ENCODE measurements at regions of chr12 and their contacts with region 1.

Region 1: DNA sequence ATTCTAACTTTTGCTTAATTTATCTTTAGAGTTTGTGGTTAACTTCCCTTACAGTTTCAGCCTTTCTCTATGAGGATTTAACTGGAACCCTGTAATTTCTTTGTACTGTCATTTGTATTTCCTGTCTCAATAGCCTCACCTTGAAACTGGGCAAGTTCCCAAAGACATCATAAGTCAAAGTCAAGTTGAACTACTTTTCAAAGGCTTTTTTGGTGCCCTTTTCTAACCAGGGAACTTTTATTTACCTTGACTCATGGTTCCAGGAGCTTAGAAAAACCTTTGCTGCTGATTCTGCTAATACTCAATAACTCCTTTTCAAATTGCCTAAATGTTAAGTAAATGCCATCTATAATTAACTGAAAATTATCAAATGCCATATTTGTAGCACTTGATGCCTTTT is 200.8 kb upstream of the KRR1 start:
- DNase-seq: no peak
- H3K4me3 Mint-ChIP-seq: no peak overlapping the region
- H3K27ac Mint-ChIP-seq: no peak overlapping the region
- H3K4me1 Mint-ChIP-seq: peaks cover 26% of the 10 kb centered on the region
- H3K27me3 Mint-ChIP-seq: peaks cover 12% of the 10 kb centered on the region

Region 2: DNA sequence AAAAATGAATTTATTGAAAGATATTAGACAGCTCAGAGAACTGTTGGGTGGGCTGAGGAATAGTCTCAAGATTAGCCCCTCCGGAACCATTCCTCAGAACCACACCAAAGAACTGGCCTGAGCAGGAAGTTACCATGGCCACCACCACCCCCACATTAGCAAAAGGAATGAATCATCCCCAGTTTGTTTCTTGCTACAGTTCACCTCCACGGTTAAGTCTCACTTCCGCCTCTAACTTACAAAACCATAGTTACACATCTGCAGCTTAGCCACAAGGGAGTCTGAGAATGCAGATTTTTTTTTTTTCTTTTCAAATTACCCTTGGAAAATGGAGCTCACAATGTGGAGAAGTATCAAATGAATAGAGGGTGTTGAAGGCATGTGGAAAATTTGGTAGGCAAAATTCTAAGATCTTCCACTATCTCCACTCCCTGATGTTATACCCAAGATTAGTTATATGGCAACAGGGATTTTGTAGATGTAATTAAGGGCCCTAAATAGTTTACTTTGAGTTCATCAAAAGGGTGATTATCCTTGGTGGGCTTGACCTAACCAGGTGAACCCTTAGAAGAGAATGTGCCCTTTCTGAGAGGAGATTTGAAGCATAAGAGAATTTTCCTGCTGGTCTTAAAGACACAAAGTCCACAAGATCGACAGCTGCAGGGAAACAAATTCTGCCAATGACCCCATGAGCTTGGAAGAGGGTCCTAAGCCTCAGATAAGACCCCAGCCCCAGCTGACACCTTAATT is 71.0 kb before region 1 on chr12:
- intact Hi-C with region 1: loop called (anchors 1 kb)
- DNase-seq: peak; percentile 27
- H3K4me3 Mint-ChIP-seq: no peak overlapping the region
- H3K27ac Mint-ChIP-seq: peak overlapping the region; percentile 76
- H3K4me1 Mint-ChIP-seq: peaks cover 46% of the 10 kb centered on the region
- H3K27me3 Mint-ChIP-seq: peaks cover 12% of the 10 kb centered on the region

Region 3: DNA sequence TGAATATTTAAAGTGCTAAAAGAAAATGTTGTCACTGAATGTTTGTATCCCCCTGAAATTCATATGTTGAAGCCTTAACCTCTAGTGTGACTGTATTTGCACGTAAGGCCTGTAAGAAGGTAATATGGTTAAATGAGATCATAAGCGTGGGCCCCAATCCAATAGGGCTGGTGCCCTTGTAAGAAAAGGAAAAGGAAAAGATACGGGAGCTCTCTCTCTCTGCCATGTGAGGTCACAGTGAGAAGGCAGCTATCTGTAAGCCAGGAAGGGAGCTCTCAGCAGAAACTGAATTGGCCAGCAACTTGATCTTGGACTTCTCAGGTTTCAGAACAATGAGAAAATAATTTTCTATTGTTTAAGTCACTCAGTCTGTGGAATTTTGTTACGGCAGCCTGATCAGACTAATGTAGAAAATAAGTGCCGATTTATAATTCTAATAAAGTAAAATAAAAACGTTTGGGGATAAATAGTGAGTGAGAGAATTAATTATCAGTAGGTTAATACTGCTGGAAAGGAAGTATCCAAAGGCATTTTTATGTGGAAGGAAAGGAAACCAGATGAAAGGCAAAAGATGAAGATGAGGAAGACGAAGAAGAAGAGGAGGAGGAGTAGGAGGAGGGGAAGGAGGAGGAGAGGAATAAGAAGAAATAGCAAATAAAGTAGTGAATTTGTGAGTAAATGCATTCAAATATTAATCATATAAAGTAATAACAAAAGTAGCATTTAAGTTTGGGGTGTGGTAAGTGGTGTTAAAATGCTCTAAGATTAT is 12.3 kb before region 1 on chr12:
- intact Hi-C with region 1: no loop called
- DNase-seq: no peak
- H3K4me3 Mint-ChIP-seq: no peak overlapping the region
- H3K27ac Mint-ChIP-seq: no peak overlapping the region
- H3K4me1 Mint-ChIP-seq: no peaks in the 10 kb centered on the region
- H3K27me3 Mint-ChIP-seq: peaks cover 16% of the 10 kb centered on the region

Region 4: GRCh38 chr12:75747572-75748021 is 35.3 kb after region 1 on chr12:
- intact Hi-C with region 1: no loop called
- DNase-seq: no peak
- H3K4me3 Mint-ChIP-seq: no peak overlapping the region
- H3K27ac Mint-ChIP-seq: no peak overlapping the region
- H3K4me1 Mint-ChIP-seq: no peaks in the 10 kb centered on the region
- H3K27me3 Mint-ChIP-seq: peaks cover 34% of the 10 kb centered on the region

Region 5: DNA sequence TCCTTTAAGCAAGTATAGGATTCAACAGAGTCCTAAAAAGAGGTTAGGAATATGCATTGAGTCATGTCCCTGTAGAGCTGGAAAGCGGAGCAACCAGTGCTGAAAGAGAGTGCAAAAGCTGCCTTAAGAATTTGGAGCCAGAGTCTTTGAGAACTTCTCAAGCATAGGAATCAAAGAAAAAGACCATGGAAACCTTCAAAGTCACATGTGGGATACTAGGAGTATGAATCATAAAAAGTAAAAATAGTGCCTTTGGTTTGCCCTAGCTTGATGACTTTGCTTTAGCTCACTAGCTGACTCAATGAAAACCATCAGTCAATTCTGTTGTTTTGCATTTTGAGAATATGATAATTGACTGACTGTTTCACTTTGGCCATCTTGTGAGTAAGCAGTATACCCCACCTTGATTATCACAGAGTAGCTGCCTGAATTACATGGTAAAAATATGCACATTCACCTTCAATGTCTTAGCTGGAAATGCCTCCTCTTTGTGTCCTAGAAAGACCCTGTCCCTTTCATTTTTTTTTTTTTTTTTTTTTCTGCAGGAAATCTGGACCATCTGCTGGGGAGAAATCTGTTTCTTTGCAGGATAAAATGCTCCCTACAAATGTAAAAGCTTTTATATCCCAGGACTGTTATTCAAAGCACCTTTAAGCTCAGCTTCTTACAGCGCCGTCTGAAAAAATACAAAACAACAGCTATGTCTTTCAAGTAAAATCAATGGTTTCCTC is 47.8 kb after region 1 on chr12:
- intact Hi-C with region 1: loop called (anchors 10 kb)
- DNase-seq: no peak
- H3K4me3 Mint-ChIP-seq: no peak overlapping the region
- H3K27ac Mint-ChIP-seq: no peak overlapping the region
- H3K4me1 Mint-ChIP-seq: peaks cover 12% of the 10 kb centered on the region
- H3K27me3 Mint-ChIP-seq: peaks cover 26% of the 10 kb centered on the region

Region 6: DNA sequence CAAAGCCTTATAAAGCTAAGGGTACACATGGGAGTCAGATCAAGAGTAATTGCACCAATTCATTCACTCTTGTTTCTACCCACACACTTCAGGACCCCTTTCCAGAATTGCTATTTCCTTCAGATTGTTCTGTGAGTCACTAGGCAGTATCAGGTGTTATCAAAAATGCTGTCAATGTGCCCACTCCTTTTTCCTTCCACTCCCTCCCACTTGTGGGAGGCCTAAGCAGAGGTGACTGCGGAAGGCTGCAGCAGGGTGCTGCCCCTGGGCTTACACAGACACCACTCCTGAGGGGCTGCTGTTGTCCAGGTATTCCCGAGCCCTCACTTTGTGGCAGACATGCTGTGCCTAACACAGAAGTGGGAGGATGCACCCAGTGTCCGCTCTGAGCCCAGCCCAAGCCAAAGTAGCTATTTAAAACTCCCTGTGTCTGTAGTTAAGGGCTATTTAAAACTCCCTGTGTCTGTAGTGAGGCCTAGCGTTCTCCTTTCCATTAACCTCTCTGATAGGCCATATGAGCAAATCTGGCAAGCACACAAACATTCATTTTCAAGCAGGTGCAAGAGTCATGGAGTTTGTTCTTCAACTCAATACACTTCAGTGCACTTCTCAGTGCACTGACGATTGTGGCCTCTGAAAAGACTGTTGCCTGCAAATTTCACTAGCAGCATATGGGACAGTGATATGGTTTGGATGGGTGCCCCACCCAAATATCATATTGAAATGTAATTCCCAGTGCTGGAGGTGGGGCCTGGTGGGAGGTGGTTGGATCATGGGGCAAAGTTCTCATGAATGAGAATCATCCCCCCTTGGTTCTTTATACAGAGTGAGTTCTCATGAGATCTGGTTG is 201.5 kb after region 1 on chr12:
- intact Hi-C with region 1: loop called (anchors 1 kb)
- DNase-seq: no peak
- H3K4me3 Mint-ChIP-seq: no peak overlapping the region
- H3K27ac Mint-ChIP-seq: peak overlapping the region; percentile 40
- H3K4me1 Mint-ChIP-seq: peaks cover 27% of the 10 kb centered on the region
- H3K27me3 Mint-ChIP-seq: peaks cover 1% of the 10 kb centered on the region